Psoas muscle (tissue), 8 donors: ENCODE measurements at regions of chr16 and their contacts with region 1.

Region 1: DNA sequence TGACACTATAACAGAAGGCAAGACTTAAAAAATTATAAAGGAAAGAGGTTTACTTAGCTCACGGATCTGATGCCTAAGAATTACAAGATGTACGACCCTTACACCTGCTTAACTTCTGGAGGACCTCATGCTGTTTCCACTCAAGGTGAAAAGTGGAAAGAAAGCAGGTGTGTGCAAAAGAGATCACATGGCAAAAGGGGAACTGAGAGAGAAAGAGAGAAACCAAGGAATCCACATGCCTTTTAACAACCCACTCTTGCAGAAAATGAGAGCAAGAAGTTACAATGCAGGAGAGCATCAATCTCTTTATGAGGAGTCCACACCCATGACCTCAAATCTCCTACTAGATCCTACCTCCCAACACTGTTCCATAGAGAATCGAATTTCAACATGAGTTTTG is 2382.2 kb downstream of the TP53TG3F start:
- DNase-seq: no peak
- ATAC-seq: no peak
- H3K4me3 ChIP-seq: no peak overlapping the region
- H3K27ac ChIP-seq: no peak overlapping the region
- H3K4me1 ChIP-seq: no peaks in the 10 kb centered on the region
- H3K27me3 ChIP-seq: no peaks in the 10 kb centered on the region
- CTCF ChIP-seq: no peak

Region 2: GRCh38 chr16:35751191-35751941 is 90.3 kb before region 1 on chr16:
- intact Hi-C with region 1: loop called in 1 of 2 experiments (anchors 10 kb)
- DNase-seq: no peak
- ATAC-seq: no peak
- H3K4me3 ChIP-seq: no peak overlapping the region
- H3K27ac ChIP-seq: no peak overlapping the region
- H3K4me1 ChIP-seq: no peaks in the 10 kb centered on the region
- H3K27me3 ChIP-seq: peaks cover 0 to 4% (median 0%) of the 10 kb centered on the region in 3 donors
- CTCF ChIP-seq: no peak